ENCODE measurements at regions of chr1 and their contacts with region 1.

Region 1: DNA sequence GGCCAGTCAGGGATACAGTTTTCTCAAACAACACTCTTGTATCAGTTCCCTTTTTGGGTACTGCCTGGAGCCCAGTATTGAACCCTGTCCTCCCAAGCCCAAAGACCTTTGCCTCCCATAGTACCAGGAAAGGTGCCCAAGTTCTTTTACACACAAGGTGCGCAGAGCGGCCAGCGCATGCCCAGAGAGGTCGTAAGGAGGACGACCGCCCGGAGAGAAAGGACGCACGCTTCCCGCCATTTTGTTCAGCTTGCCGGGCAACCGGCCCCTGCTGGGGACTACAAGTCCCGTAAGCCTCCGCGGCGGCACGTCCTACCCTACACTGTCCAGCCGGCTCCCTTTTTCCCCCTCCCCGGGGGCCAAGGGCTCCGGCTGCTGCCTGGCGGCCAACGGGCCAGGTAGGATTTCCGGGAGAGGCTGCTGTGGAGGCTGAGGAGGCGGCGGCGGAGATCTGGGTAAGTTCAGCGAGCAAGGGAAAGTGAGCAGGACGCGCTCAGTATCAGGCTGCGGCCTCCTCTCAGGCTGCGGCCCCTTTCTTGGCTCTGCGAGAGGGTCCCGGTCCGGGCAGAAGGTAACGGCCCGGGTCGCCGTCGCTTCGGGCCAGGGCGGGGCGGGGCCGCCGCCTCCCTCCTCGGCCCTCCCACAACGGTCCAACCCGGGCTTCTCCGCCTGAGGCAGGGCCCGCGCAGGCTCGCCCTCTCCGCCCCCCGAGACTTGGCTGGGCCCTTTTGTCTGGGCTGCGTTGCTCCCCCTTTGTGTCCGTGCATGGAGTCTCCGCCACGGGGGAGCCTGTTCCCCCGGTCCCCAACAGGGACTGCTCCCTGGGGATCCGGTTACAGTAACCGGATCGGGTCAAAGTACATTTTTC is at the start of gene PHACTR4:
- ATAC-seq: peak; percentile 90 to 98 (median 98)
- H3K4me3 ChIP-seq: peak within 1 kb of the TSS; percentile 58 to 87 (median 85)
- H3K27ac ChIP-seq: peak within 1 kb of the TSS; percentile 88 to 90
- H3K4me1 ChIP-seq: peaks cover 15 to 16% of the 10 kb centered on the region in 2 donors
- total RNA-seq, gene PHACTR4: 5.5 to 34.1 (median 20.5) TPM

Region 2: GRCh38 chr1:28581536-28582247 is 212.1 kb after region 1 on chr1:
- in situ Hi-C with region 1: loop called in 1 of 9 experiments (anchors 25 kb)
- ATAC-seq: peak; percentile 86 to 97 (median 96)
- H3K4me3 ChIP-seq: peak overlapping the region; percentile 72 to 96 (median 76)
- H3K27ac ChIP-seq: peak overlapping the region; percentile 59 to 76
- H3K4me1 ChIP-seq: peaks cover 11 to 12% of the 10 kb centered on the region in 2 donors

Region 3: GRCh38 chr1:28602536-28603439 is 233.2 kb after region 1 on chr1:
- in situ Hi-C with region 1: loop called in 2 of 9 experiments (anchors 25 kb)
- ATAC-seq: peak; percentile 67 to 86 (median 76)
- H3K4me3 ChIP-seq: no peak overlapping the region
- H3K27ac ChIP-seq: no peak overlapping the region
- H3K4me1 ChIP-seq: no peaks in the 10 kb centered on the region

Measured in motor neuron (in vitro differentiated cells).